ENCODE measurements at regions of chr13 and their contacts with region 1.

Region 1: DNA sequence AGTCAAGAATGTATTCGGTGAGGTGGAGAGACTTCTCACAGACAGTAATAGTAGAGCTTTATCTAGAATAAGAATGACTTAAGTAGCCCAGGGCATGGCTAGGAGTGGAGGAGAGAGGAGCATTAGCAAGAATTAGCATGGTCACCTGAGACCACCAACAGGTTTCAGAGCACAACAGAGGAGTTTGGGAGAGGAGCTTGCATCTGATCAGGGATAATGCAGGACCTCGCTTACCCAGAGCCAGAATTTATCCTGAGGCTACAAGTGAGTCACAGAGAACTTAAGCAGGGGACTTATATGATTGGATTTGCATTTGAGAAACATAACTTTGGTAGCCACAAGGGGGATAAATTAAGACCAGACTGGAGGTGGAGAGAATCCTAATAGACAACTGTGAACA is 102.1 kb upstream of the FNDC3A start:
- DNase-seq: no peak
- ATAC-seq: peak; percentile 18

Region 2: GRCh38 chr13:48783181-48783630 is 90.4 kb before region 1 on chr13:
- intact Hi-C with region 1: loop called (anchors 5 kb)
- DNase-seq: peak; percentile 88
- ATAC-seq: peak; percentile 85

Region 3: GRCh38 chr13:49020333-49020732 is 146.7 kb after region 1 on chr13:
- intact Hi-C with region 1: no loop called
- DNase-seq: no peak
- ATAC-seq: no peak